ENCODE measurements at regions of chr11 and their contacts with region 1.

Region 1: DNA sequence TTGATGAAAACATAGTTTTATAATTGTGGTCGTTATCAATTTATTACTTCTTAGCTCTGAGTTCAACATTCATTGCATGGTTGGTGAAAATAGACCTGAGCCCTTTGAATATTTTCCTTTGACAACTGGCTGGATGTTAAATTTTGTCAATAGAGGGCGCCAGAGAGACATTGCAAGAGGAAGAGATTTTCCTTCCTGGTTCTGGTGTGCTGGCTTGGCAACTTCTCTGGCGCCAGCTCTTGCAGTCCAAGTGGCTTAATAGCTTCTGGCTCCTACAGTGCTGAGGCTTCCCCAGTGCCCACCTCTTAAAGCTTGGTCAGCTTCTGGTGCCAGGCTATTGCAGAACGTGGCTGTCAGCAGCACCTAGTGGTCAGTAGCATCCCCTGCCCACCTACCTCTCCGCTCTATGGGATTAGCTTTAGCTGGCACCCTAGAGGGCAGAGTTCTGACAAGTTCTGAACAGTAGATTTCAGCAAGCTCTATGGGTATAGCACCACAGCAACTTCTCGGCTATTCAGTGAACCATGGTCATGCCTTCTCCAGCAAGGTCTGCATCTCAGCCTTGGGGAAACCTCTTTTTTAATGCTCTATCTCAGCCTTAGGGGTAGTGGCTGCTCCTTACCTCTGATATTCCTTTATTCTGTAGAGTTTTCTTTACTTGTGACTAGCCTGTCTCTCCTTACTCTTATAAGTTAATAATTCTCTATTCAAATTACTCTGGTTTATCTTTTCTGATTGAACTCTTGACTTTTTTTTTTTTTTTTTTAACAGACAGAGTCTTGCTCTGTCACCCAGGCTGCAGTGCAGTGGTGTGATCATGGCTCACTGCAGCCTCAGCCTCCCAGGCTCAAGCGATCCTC is 59.4 kb downstream of the ACER3 start:
- DNase-seq: peak; percentile 83 to 92 (median 91)
- H3K4me3 ChIP-seq: peak overlapping the region in 6 of 7 experiments; percentile 10 to 72 (median 58)
- H3K27ac ChIP-seq: no peak overlapping the region
- H3K4me1 ChIP-seq: peaks cover 0 to 9% (median 2%) of the 10 kb centered on the region in 4 experiments
- H3K27me3 ChIP-seq: no peaks in the 10 kb centered on the region

Region 2: GRCh38 chr11:76734456-76735420 is 185.4 kb before region 1 on chr11:
- CTCF ChIA-PET with region 1: interaction called, 45 read pairs
- POLR2A ChIA-PET with region 1: interaction called, 3 read pairs
- DNase-seq: no peak
- H3K4me3 ChIP-seq: no peak overlapping the region
- H3K27ac ChIP-seq: no peak overlapping the region
- H3K4me1 ChIP-seq: no peaks in the 10 kb centered on the region
- H3K27me3 ChIP-seq: peaks cover 0 to 15% (median 0%) of the 10 kb centered on the region in 5 experiments

Region 3: DNA sequence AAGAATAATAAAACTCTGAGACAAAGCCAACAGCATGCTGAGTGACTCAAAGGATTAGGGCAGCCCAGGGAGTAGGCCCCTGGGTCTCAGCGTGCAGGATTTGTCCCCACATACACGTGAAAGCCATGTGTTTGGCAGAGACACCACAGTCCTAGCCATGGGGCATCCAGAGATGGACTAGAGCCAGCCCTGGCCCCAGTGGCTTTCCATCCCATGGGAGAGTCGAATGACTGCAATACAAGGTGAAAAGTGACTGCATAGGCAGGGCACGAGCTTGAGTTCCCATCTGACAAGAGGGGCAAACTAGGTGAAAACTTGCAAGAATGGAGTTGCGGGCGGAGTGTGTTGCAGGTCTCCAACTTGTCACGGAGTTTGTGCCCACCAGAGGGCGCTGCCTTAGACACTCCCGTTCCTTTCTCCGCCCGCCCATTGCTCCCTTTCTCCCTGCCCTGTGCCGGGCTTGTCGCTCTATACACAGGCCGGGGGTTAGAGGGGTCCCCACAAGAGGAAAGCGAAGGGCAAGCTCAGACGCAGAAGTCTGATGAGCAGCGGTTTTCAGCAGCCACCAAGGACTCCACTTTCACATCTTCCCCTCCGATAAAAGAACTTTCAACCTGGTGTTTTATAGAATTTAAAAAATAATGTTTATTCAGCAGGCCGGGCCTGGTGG is 112.8 kb before region 1 on chr11:
- CTCF ChIA-PET with region 1: interaction called, 135 read pairs
- POLR2A ChIA-PET with region 1: interaction called, 3 read pairs
- DNase-seq: peak; percentile 78 to 86 (median 83)
- H3K4me3 ChIP-seq: no peak overlapping the region
- H3K27ac ChIP-seq: no peak overlapping the region
- H3K4me1 ChIP-seq: peaks cover 0 to 5% (median 1%) of the 10 kb centered on the region in 4 experiments
- H3K27me3 ChIP-seq: no peaks in the 10 kb centered on the region

Region 4: DNA sequence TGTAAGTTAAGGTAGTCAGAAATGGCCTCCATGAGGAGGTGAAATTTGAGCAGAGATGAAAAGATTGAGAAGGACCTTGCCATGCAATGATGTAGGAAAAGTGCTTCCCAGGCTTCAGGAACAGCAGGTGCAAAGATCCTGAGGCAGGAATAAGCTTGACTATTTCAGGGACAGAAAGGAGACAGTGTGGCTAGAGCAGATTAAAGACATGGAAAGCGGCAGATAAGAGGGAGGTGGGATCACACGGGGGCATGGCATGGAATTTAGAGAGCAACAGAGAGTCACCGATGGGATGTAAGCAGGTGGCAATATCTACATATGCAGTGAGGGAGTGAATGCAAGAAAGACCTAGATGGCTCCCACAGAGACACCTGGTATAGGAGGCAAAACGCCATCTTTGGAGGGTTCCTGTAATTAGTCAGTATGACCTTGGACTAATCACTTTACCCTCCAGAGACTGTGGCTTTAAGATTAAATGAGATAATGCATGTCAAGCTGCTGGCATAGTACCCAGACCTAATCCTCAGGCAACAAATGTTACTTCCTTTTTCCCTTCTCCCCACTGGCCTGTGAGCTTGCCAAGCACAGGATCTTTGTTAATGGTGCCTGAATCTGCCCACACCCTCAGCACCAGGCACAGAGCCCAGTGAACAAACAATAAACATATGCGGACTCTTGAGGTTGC is 84.0 kb before region 1 on chr11:
- CTCF ChIA-PET with region 1: interaction called, 10 read pairs
- POLR2A ChIA-PET with region 1: no interaction called
- DNase-seq: peak in 1 of 3 donors; percentile 26
- H3K4me3 ChIP-seq: no peak overlapping the region
- H3K27ac ChIP-seq: no peak overlapping the region
- H3K4me1 ChIP-seq: peaks cover 0 to 4% (median 0%) of the 10 kb centered on the region in 4 experiments
- H3K27me3 ChIP-seq: peaks cover 0 to 2% (median 0%) of the 10 kb centered on the region in 5 experiments

Region 5: DNA sequence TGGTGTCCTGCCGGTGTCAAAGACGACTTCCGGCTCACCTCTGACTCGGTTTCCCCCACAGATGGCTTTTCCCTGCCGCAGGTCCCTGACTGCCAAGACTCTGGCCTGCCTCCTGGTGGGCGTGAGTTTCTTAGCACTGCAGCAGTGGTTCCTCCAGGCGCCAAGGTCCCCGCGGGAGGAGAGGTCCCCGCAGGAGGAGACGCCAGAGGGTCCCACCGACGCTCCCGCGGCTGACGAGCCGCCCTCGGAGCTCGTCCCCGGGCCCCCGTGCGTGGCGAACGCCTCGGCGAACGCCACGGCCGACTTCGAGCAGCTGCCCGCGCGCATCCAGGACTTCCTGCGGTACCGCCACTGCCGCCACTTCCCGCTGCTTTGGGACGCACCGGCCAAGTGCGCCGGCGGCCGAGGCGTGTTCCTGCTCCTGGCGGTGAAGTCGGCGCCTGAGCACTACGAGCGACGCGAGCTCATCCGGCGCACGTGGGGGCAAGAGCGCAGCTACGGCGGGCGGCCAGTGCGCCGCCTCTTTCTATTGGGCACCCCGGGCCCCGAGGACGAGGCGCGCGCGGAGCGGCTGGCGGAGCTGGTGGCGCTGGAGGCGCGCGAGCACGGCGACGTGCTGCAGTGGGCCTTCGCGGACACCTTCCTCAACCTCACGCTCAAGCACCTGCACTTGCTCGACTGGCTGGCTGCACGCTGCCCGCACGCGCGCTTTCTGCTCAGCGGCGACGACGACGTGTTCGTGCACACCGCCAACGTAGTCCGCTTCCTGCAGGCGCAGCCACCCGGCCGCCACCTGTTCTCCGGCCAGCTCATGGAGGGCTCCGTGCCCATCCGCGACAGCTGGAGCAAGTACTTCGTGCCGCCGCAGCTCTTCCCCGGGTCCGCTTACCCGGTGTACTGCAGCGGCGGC is 119.6 kb after region 1 on chr11:
- CTCF ChIA-PET with region 1: interaction called, 21 read pairs
- POLR2A ChIA-PET with region 1: no interaction called
- DNase-seq: peak; percentile 42 to 76 (median 64)
- H3K4me3 ChIP-seq: peak overlapping the region in 5 of 7 experiments; percentile 19 to 72 (median 56)
- H3K27ac ChIP-seq: no peak overlapping the region
- H3K4me1 ChIP-seq: peaks cover 0 to 10% (median 9%) of the 10 kb centered on the region in 4 experiments
- H3K27me3 ChIP-seq: peaks cover 0 to 37% (median 13%) of the 10 kb centered on the region in 5 experiments